ENCODE measurements at regions of chr22 and their contacts with region 1.

Region 1: DNA sequence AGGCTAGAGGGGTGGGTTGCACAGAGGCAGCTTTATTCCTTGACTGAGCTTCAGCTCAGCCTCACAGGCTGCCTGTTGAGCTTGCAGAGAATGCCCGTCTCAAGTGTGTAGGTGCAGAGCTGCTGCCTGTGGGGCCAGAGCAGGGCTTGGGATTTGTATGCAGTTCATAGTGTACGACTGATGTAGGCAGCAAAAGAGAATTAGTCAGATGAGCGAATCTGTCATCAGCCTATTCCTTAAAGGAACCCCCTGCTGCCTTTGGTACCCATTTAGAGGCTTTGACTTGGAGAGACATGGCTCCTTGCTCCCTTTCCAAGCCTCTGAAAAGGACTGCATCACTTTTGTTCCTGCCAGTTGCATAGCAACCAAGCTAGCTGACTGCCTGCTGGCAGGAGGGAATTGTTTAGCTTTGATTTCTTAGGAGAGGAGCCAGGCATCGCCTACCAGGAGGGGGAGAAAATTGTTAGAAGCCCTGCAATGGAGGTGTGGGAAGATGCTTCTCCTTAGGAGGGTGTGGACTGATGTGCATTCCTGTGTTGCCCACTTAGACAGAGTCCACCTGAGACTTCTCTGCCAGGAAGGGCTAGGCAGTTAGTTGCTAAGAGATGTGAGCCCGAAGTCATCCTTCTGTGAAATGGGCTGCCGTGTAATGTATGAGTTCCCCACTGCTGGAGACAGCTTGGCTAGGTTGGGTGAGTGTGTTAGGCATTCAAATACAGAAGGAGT is 10.9 kb downstream of the ACO2 start:
- DNase-seq: peak; percentile 61 to 68
- ATAC-seq: peak; percentile 65
- H3K4me3 ChIP-seq: no peak overlapping the region
- H3K27ac ChIP-seq: peak overlapping the region in 1 of 2 donors; percentile 93
- H3K4me1 ChIP-seq: peaks cover 3 to 4% of the 10 kb centered on the region in 2 donors
- H3K27me3 ChIP-seq: no peaks in the 10 kb centered on the region

Region 2: GRCh38 chr22:41191467-41191866 is 288.4 kb before region 1 on chr22:
- intact Hi-C with region 1: no loop called
- DNase-seq: no peak
- ATAC-seq: no peak
- H3K4me3 ChIP-seq: no peak overlapping the region
- H3K27ac ChIP-seq: no peak overlapping the region
- H3K4me1 ChIP-seq: no peaks in the 10 kb centered on the region
- H3K27me3 ChIP-seq: no peaks in the 10 kb centered on the region

Region 3: GRCh38 chr22:41217553-41218157 is 262.2 kb before region 1 on chr22:
- intact Hi-C with region 1: no loop called
- DNase-seq: peak in 1 of 2 donors; percentile 80
- ATAC-seq: peak; percentile 49
- H3K4me3 ChIP-seq: no peak overlapping the region
- H3K27ac ChIP-seq: no peak overlapping the region
- H3K4me1 ChIP-seq: no peaks in the 10 kb centered on the region
- H3K27me3 ChIP-seq: no peaks in the 10 kb centered on the region

Region 4: GRCh38 chr22:41504397-41504796 is 24.6 kb after region 1 on chr22:
- intact Hi-C with region 1: loop called in 1 of 2 experiments (anchors 2 kb)
- DNase-seq: peak; percentile 81 to 92
- ATAC-seq: peak; percentile 84
- H3K4me3 ChIP-seq: no peak overlapping the region
- H3K27ac ChIP-seq: no peak overlapping the region
- H3K4me1 ChIP-seq: no peaks in the 10 kb centered on the region
- H3K27me3 ChIP-seq: no peaks in the 10 kb centered on the region

Measured in aorta (tissue), 5 donors.